MCF 10A (cell line): ENCODE measurements at regions of chr20 and their contacts with region 1.

Region 1: DNA sequence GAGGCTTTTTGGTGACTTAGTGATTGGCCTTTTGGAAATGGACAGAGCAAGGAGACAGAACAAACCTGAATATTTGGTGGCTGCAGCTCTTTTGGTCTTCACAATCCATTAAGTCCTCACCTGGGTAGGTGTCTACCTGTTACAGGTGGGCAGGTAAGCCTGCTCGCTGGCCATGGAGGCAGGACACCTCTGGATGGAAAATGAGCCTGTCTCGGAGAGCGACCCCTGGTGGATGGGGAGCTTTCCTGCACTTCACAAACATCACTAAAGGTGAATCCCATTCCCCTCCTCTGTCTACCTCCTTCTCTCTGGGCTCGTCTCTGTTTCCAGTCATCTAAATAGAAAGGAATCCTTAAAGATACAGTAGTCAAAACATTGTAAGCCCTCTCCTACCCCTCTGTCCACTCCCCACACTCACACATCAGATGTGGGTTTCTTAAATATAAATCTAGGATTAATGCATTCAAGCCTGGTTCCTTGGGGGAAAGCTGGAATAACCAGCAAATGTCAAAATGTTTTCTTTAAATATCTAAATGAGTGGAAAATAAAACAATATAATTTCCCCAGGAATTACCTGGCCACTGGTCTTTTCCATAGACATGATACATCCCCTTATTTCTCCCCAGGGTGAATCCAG is 304.9 kb downstream of the CDH26 start:
- DNase-seq: peak; percentile 72
- H3K4me3 Mint-ChIP-seq: no peak overlapping the region
- H3K27ac Mint-ChIP-seq: no peak overlapping the region
- H3K4me1 Mint-ChIP-seq: no peaks in the 10 kb centered on the region
- H3K27me3 Mint-ChIP-seq: peaks cover 39% of the 10 kb centered on the region
- CTCF ChIP-seq: peak; percentile 84

Region 2: GRCh38 chr20:60087563-60088153 is 175.4 kb before region 1 on chr20:
- CTCF ChIA-PET with region 1: no interaction called
- POLR2A ChIA-PET with region 1: no interaction called
- intact Hi-C with region 1: no loop called
- DNase-seq: no peak
- H3K4me3 Mint-ChIP-seq: no peak overlapping the region
- H3K27ac Mint-ChIP-seq: no peak overlapping the region
- H3K4me1 Mint-ChIP-seq: no peaks in the 10 kb centered on the region
- H3K27me3 Mint-ChIP-seq: peaks cover 62% of the 10 kb centered on the region
- CTCF ChIP-seq: no peak

Region 3: GRCh38 chr20:60137629-60138245 is 125.3 kb before region 1 on chr20:
- CTCF ChIA-PET with region 1: interaction called, 3 read pairs
- POLR2A ChIA-PET with region 1: no interaction called
- intact Hi-C with region 1: loop called (anchors 10 kb)
- DNase-seq: peak; percentile 65
- H3K4me3 Mint-ChIP-seq: peak overlapping the region; percentile 80
- H3K27ac Mint-ChIP-seq: no peak overlapping the region
- H3K4me1 Mint-ChIP-seq: peaks cover 1% of the 10 kb centered on the region
- H3K27me3 Mint-ChIP-seq: peaks cover 12% of the 10 kb centered on the region
- CTCF ChIP-seq: peak; percentile 71

Region 4: GRCh38 chr20:60224914-60225313 is 38.2 kb before region 1 on chr20:
- CTCF ChIA-PET with region 1: interaction called, 21 read pairs
- POLR2A ChIA-PET with region 1: no interaction called
- intact Hi-C with region 1: loop called (anchors 1 kb)
- DNase-seq: peak; percentile 43
- H3K4me3 Mint-ChIP-seq: no peak overlapping the region
- H3K27ac Mint-ChIP-seq: no peak overlapping the region
- H3K4me1 Mint-ChIP-seq: no peaks in the 10 kb centered on the region
- H3K27me3 Mint-ChIP-seq: peaks cover 16% of the 10 kb centered on the region
- CTCF ChIP-seq: peak; percentile 39

Region 5: GRCh38 chr20:60249436-60249835 is 13.6 kb before region 1 on chr20:
- CTCF ChIA-PET with region 1: interaction called, 33 read pairs
- POLR2A ChIA-PET with region 1: no interaction called
- intact Hi-C with region 1: no loop called
- DNase-seq: peak; percentile 94
- H3K4me3 Mint-ChIP-seq: no peak overlapping the region
- H3K27ac Mint-ChIP-seq: peak overlapping the region; percentile 35
- H3K4me1 Mint-ChIP-seq: peaks cover 18% of the 10 kb centered on the region
- H3K27me3 Mint-ChIP-seq: peaks cover 5% of the 10 kb centered on the region
- CTCF ChIP-seq: no peak

Region 6: GRCh38 chr20:60381643-60382400 is 118.7 kb after region 1 on chr20:
- CTCF ChIA-PET with region 1: no interaction called
- POLR2A ChIA-PET with region 1: no interaction called
- intact Hi-C with region 1: no loop called
- DNase-seq: no peak
- H3K4me3 Mint-ChIP-seq: no peak overlapping the region
- H3K27ac Mint-ChIP-seq: no peak overlapping the region
- H3K4me1 Mint-ChIP-seq: no peaks in the 10 kb centered on the region
- H3K27me3 Mint-ChIP-seq: peaks cover 18% of the 10 kb centered on the region
- CTCF ChIP-seq: no peak